Activated T-helper 1 cell treated with anti-CD3 and anti-CD28 coated beads, Interleukin-12 subunit alpha, Interleukin-12 subunit beta, Interleukin-2, Interleukin-4 antibody, amounts not matched to agents 30 ng/mL and 10 ng/mL and 1 ng/mL, durations not matched to agents 14 hours and 24 hours and 36 hours (primary cell): ENCODE measurements at regions of chrX and their contacts with region 1.

Region 1: DNA sequence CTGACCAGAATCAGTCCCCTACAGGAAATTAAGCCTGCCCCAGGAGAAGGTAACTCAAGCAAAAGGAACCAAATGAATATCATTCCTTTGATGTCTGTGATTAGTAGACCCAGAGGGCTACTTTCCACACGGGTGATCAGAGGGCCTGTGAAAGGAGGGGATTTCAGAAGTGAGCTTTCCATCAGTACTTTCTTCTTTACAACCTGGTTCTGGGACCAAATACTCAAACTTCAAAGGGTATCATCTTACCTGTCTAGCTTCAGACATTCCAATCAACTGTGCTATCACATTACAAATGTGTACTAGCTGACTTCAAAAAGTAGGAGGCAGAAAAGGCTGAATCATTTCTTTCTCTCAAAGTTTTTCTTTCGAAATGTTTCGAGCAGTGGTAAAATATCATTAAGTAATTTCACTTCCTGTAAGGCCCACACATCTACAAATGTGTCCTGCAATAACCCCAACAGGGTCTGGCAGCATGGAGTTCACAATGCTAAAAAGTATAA is 23.9 kb downstream of the ACSL4 start:
- DNase-seq: no peak
- H3K4me3 Mint-ChIP-seq: peak overlapping the region; percentile 48
- H3K27ac Mint-ChIP-seq: peak overlapping the region; percentile 74
- H3K4me1 Mint-ChIP-seq: peaks cover 73% of the 10 kb centered on the region
- H3K27me3 Mint-ChIP-seq: no peaks in the 10 kb centered on the region

Region 2: GRCh38 chrX:109656774-109657173 is 52.4 kb before region 1 on chrX:
- intact Hi-C with region 1: loop called (anchors 10 kb)
- DNase-seq: no peak
- H3K4me3 Mint-ChIP-seq: no peak overlapping the region
- H3K27ac Mint-ChIP-seq: no peak overlapping the region
- H3K4me1 Mint-ChIP-seq: peaks cover 5% of the 10 kb centered on the region
- H3K27me3 Mint-ChIP-seq: no peaks in the 10 kb centered on the region

Region 3: DNA sequence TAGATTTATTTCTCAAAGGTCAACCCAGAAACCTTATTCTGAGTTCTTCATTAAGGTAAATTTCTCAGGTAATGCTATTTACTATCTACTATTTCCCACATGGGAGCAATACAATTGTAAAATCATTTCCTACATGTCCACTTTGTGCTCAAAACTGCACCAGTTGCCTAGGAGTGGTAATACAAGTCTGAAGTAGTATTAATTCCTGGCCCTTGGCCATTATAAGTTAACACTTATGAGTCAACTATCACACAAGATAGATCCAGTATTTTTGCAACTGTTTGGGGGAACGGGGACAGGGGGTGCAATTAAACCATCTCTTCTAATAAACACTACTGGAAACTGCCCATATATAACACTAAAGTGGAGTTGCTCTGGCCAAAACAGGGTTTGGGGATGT is 25.0 kb before region 1 on chrX:
- intact Hi-C with region 1: no loop called
- DNase-seq: no peak
- H3K4me3 Mint-ChIP-seq: no peak overlapping the region
- H3K27ac Mint-ChIP-seq: no peak overlapping the region
- H3K4me1 Mint-ChIP-seq: peaks cover 11% of the 10 kb centered on the region
- H3K27me3 Mint-ChIP-seq: no peaks in the 10 kb centered on the region

Region 4: GRCh38 chrX:109720947-109721346 is 11.8 kb after region 1 on chrX:
- intact Hi-C with region 1: no loop called
- DNase-seq: no peak
- H3K4me3 Mint-ChIP-seq: no peak overlapping the region
- H3K27ac Mint-ChIP-seq: no peak overlapping the region
- H3K4me1 Mint-ChIP-seq: peaks cover 22% of the 10 kb centered on the region
- H3K27me3 Mint-ChIP-seq: no peaks in the 10 kb centered on the region

Region 5: DNA sequence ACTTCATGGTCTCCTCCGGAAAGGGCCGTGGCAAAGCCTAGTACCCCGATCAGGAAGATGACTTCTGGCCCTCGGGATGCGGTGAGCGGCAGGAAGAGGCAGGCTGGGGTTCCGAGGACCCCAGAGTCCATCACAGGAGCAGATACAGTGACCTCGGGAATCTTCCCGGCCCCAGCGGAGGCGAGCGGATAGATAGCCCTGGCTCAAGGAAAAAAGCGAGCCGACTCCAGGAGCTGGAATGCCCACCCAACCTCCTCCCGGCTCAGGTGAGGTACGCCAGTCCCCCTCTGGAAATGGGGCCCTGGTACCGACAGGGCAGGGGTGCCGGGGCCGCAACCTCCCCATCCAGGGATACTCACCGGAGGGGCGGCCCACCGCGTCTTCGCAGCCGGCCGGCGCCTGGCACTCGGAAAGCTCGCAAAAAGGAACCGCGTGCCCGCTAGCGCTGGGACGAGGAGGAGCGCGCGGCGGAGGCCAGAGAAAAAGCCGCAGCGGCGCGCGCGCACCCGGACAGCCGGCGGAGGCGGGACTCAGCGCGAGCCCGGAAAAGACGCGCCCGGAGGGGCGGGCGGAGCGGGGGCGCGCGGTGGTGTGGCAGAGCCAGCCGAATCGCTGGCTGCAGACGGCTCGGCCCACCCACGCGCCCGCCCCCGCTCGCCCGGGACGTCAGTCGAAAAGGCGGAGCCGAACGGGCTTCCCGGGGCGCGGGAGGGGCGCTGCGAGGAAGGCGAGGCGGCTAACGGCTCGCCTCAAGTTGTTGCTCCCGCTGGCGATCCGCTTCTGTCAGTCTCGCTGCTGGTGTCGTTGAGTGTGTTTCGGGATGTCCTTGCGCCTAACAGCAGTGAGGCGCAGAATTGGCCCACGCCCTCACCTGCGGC is 23.8 kb after region 1 on chrX and contains the start of gene ACSL4:
- intact Hi-C with region 1: loop called (anchors 1 kb)
- DNase-seq: peak; percentile 81
- H3K4me3 Mint-ChIP-seq: peak within 1 kb of the TSS; percentile 93
- H3K27ac Mint-ChIP-seq: peak within 1 kb of the TSS; percentile 95
- H3K4me1 Mint-ChIP-seq: peaks cover 32% of the 10 kb centered on the region
- H3K27me3 Mint-ChIP-seq: peaks cover 2% of the 10 kb centered on the region
- total RNA-seq, gene ACSL4: 76.0 and 77.3 TPM in 2 replicates

Region 6: GRCh38 chrX:109840585-109840984 is 131.4 kb after region 1 on chrX:
- intact Hi-C with region 1: loop called (anchors 5 kb)
- DNase-seq: no peak
- H3K4me3 Mint-ChIP-seq: no peak overlapping the region
- H3K27ac Mint-ChIP-seq: no peak overlapping the region
- H3K4me1 Mint-ChIP-seq: peaks cover 5% of the 10 kb centered on the region
- H3K27me3 Mint-ChIP-seq: no peaks in the 10 kb centered on the region

Region 7: DNA sequence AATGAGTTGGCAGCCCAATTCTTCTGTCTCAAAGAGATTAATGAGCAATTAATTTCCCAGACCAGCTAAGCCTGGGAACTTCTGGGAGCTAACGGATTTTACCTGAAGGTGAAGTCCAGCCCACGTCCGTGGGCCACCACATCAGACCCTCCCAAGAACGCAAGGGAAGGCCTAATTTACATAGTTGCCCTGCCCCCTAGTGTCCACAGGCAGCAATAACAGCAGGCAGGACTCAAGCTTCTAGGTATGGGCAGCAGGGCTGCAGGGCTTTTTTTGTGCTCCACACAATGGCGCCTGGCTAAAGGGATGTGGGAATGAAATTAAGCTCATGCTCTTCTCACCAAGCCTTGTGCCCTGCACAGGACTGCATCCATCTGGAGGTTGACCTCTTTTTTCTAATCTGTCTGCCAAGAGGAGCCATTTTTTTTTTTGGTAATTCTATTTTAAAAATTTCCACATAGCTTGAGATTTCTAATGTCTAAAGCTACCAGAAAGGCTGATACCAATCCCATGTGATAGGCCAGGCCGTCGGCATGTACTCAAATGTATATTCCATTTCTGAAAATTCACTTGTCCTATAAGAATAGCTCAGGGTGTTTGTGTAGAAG is 181.8 kb after region 1 on chrX:
- intact Hi-C with region 1: loop called (anchors 1 kb)
- DNase-seq: peak; percentile 4
- H3K4me3 Mint-ChIP-seq: no peak overlapping the region
- H3K27ac Mint-ChIP-seq: no peak overlapping the region
- H3K4me1 Mint-ChIP-seq: no peaks in the 10 kb centered on the region
- H3K27me3 Mint-ChIP-seq: no peaks in the 10 kb centered on the region